ENCODE measurements at regions of chr2 and their contacts with region 1.

Region 1: GRCh38 chr2:209141142-209141541 is 282.7 kb upstream of the MAP2 start:
- DNase-seq: peak; percentile 73
- H3K4me3 ChIP-seq: no peak overlapping the region
- H3K27ac ChIP-seq: peak overlapping the region; percentile 29
- H3K4me1 ChIP-seq: no peaks in the 10 kb centered on the region
- H3K27me3 ChIP-seq: no peaks in the 10 kb centered on the region
- CTCF ChIP-seq: no peak

Region 2: GRCh38 chr2:209125291-209125690 is 15.9 kb before region 1 on chr2:
- CTCF ChIA-PET with region 1: no interaction called
- dilution Hi-C with region 1: no loop called
- in situ Hi-C with region 1: no loop called
- intact Hi-C with region 1: loop called (anchors 2 kb)
- DNase-seq: no peak
- H3K4me3 ChIP-seq: no peak overlapping the region
- H3K27ac ChIP-seq: no peak overlapping the region
- H3K4me1 ChIP-seq: no peaks in the 10 kb centered on the region
- H3K27me3 ChIP-seq: no peaks in the 10 kb centered on the region
- CTCF ChIP-seq: no peak